AG04450 (cell line): ENCODE measurements at regions of chr22 and their contacts with region 1.

Region 1: GRCh38 chr22:20783844-20784723 is 10.2 kb downstream of the SERPIND1 start:
- DNase-seq: peak; percentile 20
- H3K4me3 ChIP-seq: no peak overlapping the region
- H3K27ac ChIP-seq: no peak overlapping the region
- H3K27me3 ChIP-seq: no peaks in the 10 kb centered on the region
- CTCF ChIP-seq: peak; percentile 76

Region 2: DNA sequence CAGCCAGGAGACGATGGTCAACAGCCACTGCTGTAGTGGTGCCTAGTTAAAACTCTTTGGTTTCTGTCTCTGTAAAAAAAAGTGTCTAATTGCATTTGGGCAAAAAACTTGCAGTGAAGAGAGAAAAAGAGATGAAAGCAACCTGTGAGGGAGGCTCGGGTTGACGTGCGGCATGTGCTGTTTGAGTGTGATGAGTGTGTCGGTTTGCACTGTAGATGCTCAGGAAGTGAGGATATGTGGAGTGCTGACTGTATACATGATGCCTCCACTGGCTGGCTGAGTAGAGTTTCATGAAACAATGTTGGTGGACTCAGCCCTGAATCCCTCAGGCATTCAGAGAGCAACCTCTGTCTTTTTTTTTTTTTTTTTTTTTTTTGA is 460.0 kb before region 1 on chr22:
- CTCF ChIA-PET with region 1: no interaction called
- POLR2A ChIA-PET with region 1: no interaction called
- DNase-seq: no peak
- H3K4me3 ChIP-seq: peak overlapping the region; percentile 20; the same call in 1 of the 2 replicates
- H3K27ac ChIP-seq: peak overlapping the region; percentile 94
- H3K27me3 ChIP-seq: no peaks in the 10 kb centered on the region
- CTCF ChIP-seq: no peak

Region 3: DNA sequence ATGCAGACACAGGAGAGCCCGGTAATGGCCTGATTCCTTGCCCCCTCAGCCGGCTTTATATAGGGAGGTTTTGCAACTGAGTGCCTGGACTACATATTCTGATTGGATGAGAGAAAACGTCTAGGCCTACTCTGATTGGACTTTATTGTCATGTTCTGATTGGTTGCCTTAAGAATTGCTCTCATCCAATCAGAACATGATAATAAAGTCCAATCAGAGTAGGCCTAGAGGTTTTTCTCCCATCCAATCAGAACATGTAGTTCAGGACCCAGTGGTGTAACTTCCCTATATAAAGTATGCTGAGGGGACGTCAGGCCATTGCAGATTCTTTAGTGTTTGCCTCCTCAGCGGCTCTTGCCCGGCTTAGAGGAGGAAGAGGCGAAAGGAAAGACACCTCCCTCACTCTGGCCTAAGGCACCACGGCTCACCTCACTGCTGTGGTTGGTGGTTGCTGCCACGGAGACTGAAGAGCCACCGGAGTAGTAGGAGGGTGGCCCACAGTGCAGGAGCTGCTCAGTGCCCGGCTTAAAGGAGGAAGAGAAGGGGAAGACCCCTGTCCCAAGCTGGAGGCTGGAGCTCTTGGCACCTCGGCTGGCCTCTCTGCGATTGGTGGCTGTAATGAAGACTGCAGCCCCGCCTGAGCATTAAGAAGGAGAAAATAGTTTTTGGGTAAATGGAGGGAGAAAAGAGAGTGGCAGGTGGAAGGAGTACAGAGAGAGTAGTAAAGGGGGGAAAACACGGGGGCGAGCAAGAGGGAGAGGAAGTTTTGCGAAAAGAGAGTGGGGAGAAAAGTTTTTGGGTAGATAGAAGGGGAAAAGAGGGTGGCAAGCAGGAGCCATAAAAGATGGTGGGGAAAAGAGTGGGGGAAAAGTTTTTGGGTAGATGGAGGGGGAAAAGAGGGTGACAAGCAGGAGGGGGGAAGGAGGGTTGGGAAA is 126.9 kb before region 1 on chr22:
- CTCF ChIA-PET with region 1: no interaction called
- POLR2A ChIA-PET with region 1: no interaction called
- DNase-seq: no peak
- H3K4me3 ChIP-seq: no peak overlapping the region
- H3K27ac ChIP-seq: no peak overlapping the region
- H3K27me3 ChIP-seq: peaks cover 16% of the 10 kb centered on the region
- CTCF ChIP-seq: no peak

Region 4: GRCh38 chr22:20761536-20761935 is 22.5 kb before region 1 on chr22:
- CTCF ChIA-PET with region 1: interaction called, 18 read pairs
- POLR2A ChIA-PET with region 1: no interaction called
- DNase-seq: no peak
- H3K4me3 ChIP-seq: no peak overlapping the region
- H3K27ac ChIP-seq: no peak overlapping the region
- H3K27me3 ChIP-seq: no peaks in the 10 kb centered on the region
- CTCF ChIP-seq: no peak

Region 5: GRCh38 chr22:20773793-20774212 is 10.3 kb before region 1 on chr22 and contains the start of gene SERPIND1:
- CTCF ChIA-PET with region 1: interaction called, 16 read pairs
- POLR2A ChIA-PET with region 1: no interaction called
- DNase-seq: no peak
- H3K4me3 ChIP-seq: no peak within 1 kb of the TSS
- H3K27ac ChIP-seq: peak within 1 kb of the TSS; percentile 11
- H3K27me3 ChIP-seq: no peaks in the 10 kb centered on the region
- CTCF ChIP-seq: no peak
- polyA plus RNA-seq, gene SERPIND1: 0.06 and 0.09 TPM in 2 replicates